ENCODE measurements at regions of chr3 and their contacts with region 1.

Region 1: DNA sequence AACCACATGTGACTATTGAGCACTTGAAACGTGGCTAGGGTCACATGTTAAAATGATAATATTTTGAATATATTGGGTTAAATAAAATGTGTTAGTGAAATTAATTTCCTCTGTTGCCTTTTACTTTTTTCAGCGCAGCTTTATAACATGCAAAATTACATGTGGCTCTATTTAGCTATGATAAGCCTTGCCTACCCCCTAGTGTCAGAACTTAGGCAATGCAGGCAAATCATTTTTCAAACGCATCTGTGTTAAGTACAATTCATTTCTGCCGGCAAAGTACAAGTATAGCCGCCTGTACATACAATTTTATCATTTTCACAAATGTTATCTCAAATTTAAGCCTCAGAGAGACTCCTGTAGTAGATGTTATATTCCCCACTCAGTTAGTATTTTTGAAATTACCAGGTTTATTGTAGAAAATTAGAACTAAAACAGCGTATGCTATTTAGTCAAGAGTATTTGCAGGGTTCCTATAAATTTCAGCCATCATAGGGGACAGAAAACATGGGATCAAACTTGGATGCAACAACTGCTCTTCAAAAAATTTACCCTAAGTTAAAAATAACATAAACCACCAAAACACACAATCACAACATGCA is 56.1 kb downstream of the TAFA4 start:
- DNase-seq: no peak
- ATAC-seq: peak in 1 of 2 donors; percentile 50
- H3K4me3 ChIP-seq: no peak overlapping the region
- H3K27ac ChIP-seq: no peak overlapping the region
- H3K4me1 ChIP-seq: no peaks in the 10 kb centered on the region
- H3K27me3 ChIP-seq: peaks cover 3% of the 10 kb centered on the region

Region 2: DNA sequence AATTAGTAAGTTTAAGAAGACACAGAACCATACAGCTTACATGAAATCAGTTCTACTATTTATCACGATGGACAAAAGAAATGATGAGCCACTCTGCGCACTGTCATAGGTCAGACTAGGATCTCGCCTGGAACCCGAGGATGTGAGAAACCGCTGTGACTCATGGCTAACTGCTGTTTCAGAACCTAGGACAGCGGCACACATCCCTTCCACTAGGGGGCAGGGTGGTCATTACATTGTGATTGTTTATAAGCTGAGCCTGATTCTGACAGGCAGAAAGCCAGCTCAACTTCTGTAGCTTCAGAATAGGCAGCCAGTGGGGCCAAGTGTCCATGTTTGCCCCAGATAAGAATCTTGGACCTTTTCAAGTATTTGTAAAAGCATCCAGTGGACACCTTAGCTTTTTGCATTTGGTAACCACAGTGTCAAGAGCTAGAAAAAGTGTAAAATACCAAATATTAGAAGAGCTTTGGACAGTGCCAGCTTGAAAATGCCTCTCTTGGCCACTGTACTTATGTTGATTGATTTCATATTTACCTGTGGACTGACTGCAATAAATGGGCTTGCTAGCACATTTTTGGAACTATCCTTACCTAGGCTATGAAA is 1762.3 kb before region 1 on chr3:
- intact Hi-C with region 1: loop called in 1 of 4 experiments (anchors 10 kb)
- DNase-seq: peak; percentile 56 to 83 (median 77)
- ATAC-seq: peak; percentile 71 to 79
- H3K4me3 ChIP-seq: no peak overlapping the region
- H3K27ac ChIP-seq: no peak overlapping the region
- H3K4me1 ChIP-seq: no peaks in the 10 kb centered on the region
- H3K27me3 ChIP-seq: no peaks in the 10 kb centered on the region

Region 3: GRCh38 chr3:67384760-67385397 is 1491.3 kb before region 1 on chr3:
- intact Hi-C with region 1: loop called in 1 of 4 experiments (anchors 10 kb)
- DNase-seq: peak in 2 of 3 donors; percentile 25 to 34
- ATAC-seq: peak in 1 of 2 donors; percentile 41
- H3K4me3 ChIP-seq: no peak overlapping the region
- H3K27ac ChIP-seq: no peak overlapping the region
- H3K4me1 ChIP-seq: no peaks in the 10 kb centered on the region
- H3K27me3 ChIP-seq: no peaks in the 10 kb centered on the region

Region 4: DNA sequence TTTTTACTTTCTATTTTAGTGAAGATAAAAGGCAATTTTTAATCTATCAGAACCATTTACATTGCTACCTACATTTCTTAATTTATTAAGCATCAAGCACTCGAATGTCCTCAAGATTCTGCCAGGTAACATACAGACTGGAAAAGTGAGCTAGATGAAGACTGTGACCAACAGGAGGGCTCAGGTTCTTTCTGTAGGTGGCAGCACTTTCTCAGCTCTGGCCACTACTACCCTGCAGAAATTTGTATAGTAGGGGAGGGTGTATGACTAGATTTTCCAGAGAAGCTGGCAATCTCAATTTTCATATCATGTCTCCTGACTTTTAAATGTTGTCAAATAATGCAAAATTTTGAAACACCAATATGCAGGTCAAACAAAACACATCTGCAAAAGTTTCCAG is 1056.8 kb before region 1 on chr3:
- intact Hi-C with region 1: loop called in 1 of 4 experiments (anchors 10 kb)
- DNase-seq: no peak
- ATAC-seq: no peak
- H3K4me3 ChIP-seq: no peak overlapping the region
- H3K27ac ChIP-seq: no peak overlapping the region
- H3K4me1 ChIP-seq: no peaks in the 10 kb centered on the region
- H3K27me3 ChIP-seq: no peaks in the 10 kb centered on the region

Region 5: GRCh38 chr3:68620211-68620610 is 256.0 kb before region 1 on chr3:
- intact Hi-C with region 1: no loop called
- DNase-seq: no peak
- ATAC-seq: no peak
- H3K4me3 ChIP-seq: no peak overlapping the region
- H3K27ac ChIP-seq: no peak overlapping the region
- H3K4me1 ChIP-seq: no peaks in the 10 kb centered on the region
- H3K27me3 ChIP-seq: no peaks in the 10 kb centered on the region